Ascending aorta (tissue), 2 donors: ENCODE measurements at regions of chr18 and their contacts with region 1.

Region 1: GRCh38 chr18:67104700-67105284 is 411.7 kb downstream of the DSEL start:
- DNase-seq: peak in 1 of 2 donors; percentile 66
- H3K4me3 ChIP-seq: no peak overlapping the region
- H3K27ac ChIP-seq: no peak overlapping the region
- H3K4me1 ChIP-seq: no peaks in the 10 kb centered on the region
- H3K27me3 ChIP-seq: no peaks in the 10 kb centered on the region
- CTCF ChIP-seq: peak in 2 of 3 experiments; percentile 40 to 54

Region 2: GRCh38 chr18:67199993-67200617 is 95.3 kb after region 1 on chr18:
- intact Hi-C with region 1: loop called (anchors 1 kb)
- DNase-seq: no peak
- H3K4me3 ChIP-seq: no peak overlapping the region
- H3K27ac ChIP-seq: no peak overlapping the region
- H3K4me1 ChIP-seq: no peaks in the 10 kb centered on the region
- H3K27me3 ChIP-seq: no peaks in the 10 kb centered on the region
- CTCF ChIP-seq: peak; percentile 11 to 62 (median 61)

Region 3: GRCh38 chr18:67217551-67218166 is 112.9 kb after region 1 on chr18:
- intact Hi-C with region 1: no loop called
- DNase-seq: peak in 1 of 2 donors; percentile 75
- H3K4me3 ChIP-seq: no peak overlapping the region
- H3K27ac ChIP-seq: no peak overlapping the region
- H3K4me1 ChIP-seq: no peaks in the 10 kb centered on the region
- H3K27me3 ChIP-seq: no peaks in the 10 kb centered on the region
- CTCF ChIP-seq: peak; percentile 61 to 79 (median 79)